MCF 10A (cell line): ENCODE measurements at regions of chr14 and their contacts with region 1.

Region 1: GRCh38 chr14:28608851-28609828 is 157.4 kb upstream of the FOXG1 start:
- DNase-seq: peak; percentile 78
- H3K4me3 Mint-ChIP-seq: no peak overlapping the region
- H3K27ac Mint-ChIP-seq: no peak overlapping the region
- H3K4me1 Mint-ChIP-seq: peaks cover 3% of the 10 kb centered on the region
- H3K27me3 Mint-ChIP-seq: no peaks in the 10 kb centered on the region
- CTCF ChIP-seq: peak; percentile 88

Region 2: DNA sequence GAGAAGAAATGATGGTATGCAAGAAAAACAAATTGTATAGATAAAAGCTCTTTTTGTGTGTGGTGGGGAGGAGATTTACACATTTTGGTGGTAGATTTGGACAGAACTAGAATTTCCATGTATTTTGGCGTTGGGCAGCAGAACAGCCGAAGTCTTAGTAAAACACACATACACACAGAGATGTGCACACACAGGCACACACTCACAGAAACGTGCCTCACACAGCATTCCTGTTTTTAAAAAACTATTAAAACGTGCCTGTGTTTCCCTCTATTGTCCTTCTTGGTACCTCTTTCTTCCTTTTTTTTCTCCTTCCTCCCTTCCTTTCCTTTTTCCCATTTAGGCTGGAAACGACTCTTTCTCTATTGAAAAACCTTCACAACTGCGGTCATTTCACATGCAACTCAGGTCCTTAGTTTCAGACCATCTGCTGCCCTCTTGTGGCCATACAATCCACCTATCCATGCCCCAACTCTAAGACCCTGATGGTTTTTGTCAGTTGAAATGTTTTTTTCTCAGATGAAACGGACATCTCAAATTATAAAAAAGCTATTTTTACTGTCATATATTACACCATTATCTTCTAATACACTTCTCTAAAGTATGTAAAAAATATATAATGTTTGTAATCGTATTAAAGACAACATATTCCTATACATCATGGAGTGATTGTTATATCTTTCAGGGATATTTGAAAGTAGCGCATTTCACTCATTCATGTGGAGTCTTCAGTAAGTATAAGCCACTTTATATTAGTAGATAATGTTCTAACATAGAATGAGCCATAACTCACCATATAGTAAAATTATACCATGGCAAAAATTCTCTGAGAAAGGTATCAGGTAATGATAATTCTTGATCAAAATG is 1624.6 kb before region 1 on chr14:
- CTCF ChIA-PET with region 1: interaction called, 3 read pairs
- POLR2A ChIA-PET with region 1: no interaction called
- intact Hi-C with region 1: loop called (anchors 10 kb)
- DNase-seq: peak; percentile 71
- H3K4me3 Mint-ChIP-seq: no peak overlapping the region
- H3K27ac Mint-ChIP-seq: no peak overlapping the region
- H3K4me1 Mint-ChIP-seq: peaks cover 12% of the 10 kb centered on the region
- H3K27me3 Mint-ChIP-seq: peaks cover 23% of the 10 kb centered on the region
- CTCF ChIP-seq: peak; percentile 76

Region 3: GRCh38 chr14:28101998-28102397 is 507.1 kb before region 1 on chr14:
- CTCF ChIA-PET with region 1: no interaction called
- POLR2A ChIA-PET with region 1: no interaction called
- intact Hi-C with region 1: no loop called
- DNase-seq: no peak
- H3K4me3 Mint-ChIP-seq: no peak overlapping the region
- H3K27ac Mint-ChIP-seq: no peak overlapping the region
- H3K4me1 Mint-ChIP-seq: no peaks in the 10 kb centered on the region
- H3K27me3 Mint-ChIP-seq: no peaks in the 10 kb centered on the region
- CTCF ChIP-seq: no peak

Region 4: GRCh38 chr14:28294834-28295440 is 314.2 kb before region 1 on chr14:
- CTCF ChIA-PET with region 1: interaction called, 15 read pairs
- POLR2A ChIA-PET with region 1: no interaction called
- intact Hi-C with region 1: loop called (anchors 1 kb)
- DNase-seq: peak; percentile 75
- H3K4me3 Mint-ChIP-seq: no peak overlapping the region
- H3K27ac Mint-ChIP-seq: no peak overlapping the region
- H3K4me1 Mint-ChIP-seq: no peaks in the 10 kb centered on the region
- H3K27me3 Mint-ChIP-seq: no peaks in the 10 kb centered on the region
- CTCF ChIP-seq: peak; percentile 25

Region 5: GRCh38 chr14:28412081-28412480 is 197.1 kb before region 1 on chr14:
- CTCF ChIA-PET with region 1: interaction called, 5 read pairs
- POLR2A ChIA-PET with region 1: no interaction called
- intact Hi-C with region 1: loop called (anchors 2 kb)
- DNase-seq: peak; percentile 59
- H3K4me3 Mint-ChIP-seq: no peak overlapping the region
- H3K27ac Mint-ChIP-seq: no peak overlapping the region
- H3K4me1 Mint-ChIP-seq: peaks cover 6% of the 10 kb centered on the region
- H3K27me3 Mint-ChIP-seq: no peaks in the 10 kb centered on the region
- CTCF ChIP-seq: peak; percentile 6

Region 6: DNA sequence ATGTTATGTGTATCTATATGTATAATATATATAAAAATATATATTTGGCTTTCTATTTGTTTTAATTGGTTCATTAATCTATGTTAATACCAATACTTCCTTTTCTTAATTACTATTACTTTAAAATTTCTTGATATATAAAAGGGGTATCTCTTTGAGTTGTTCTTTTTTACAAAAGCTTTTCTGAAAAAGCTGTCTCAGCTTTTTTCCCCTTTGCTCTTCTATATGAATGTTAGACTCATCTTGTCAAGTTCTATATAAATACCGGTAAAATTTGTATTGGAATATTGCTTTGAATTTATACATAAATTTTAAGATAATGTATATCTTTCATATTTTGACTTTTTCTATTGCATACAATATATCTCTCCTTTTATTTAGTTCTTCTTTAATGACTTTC is 17.6 kb after region 1 on chr14:
- CTCF ChIA-PET with region 1: interaction called, 11 read pairs
- POLR2A ChIA-PET with region 1: interaction called, 4 read pairs
- intact Hi-C with region 1: no loop called
- DNase-seq: no peak
- H3K4me3 Mint-ChIP-seq: no peak overlapping the region
- H3K27ac Mint-ChIP-seq: no peak overlapping the region
- H3K4me1 Mint-ChIP-seq: peaks cover 16% of the 10 kb centered on the region
- H3K27me3 Mint-ChIP-seq: no peaks in the 10 kb centered on the region
- CTCF ChIP-seq: no peak

Region 7: GRCh38 chr14:28867571-28867970 is 258.4 kb after region 1 on chr14:
- CTCF ChIA-PET with region 1: no interaction called
- POLR2A ChIA-PET with region 1: no interaction called
- intact Hi-C with region 1: no loop called
- DNase-seq: no peak
- H3K4me3 Mint-ChIP-seq: no peak overlapping the region
- H3K27ac Mint-ChIP-seq: no peak overlapping the region
- H3K4me1 Mint-ChIP-seq: peaks cover 5% of the 10 kb centered on the region
- H3K27me3 Mint-ChIP-seq: peaks cover 78% of the 10 kb centered on the region
- CTCF ChIP-seq: no peak